ENCODE measurements at regions of chr6 and their contacts with region 1.

Region 1: DNA sequence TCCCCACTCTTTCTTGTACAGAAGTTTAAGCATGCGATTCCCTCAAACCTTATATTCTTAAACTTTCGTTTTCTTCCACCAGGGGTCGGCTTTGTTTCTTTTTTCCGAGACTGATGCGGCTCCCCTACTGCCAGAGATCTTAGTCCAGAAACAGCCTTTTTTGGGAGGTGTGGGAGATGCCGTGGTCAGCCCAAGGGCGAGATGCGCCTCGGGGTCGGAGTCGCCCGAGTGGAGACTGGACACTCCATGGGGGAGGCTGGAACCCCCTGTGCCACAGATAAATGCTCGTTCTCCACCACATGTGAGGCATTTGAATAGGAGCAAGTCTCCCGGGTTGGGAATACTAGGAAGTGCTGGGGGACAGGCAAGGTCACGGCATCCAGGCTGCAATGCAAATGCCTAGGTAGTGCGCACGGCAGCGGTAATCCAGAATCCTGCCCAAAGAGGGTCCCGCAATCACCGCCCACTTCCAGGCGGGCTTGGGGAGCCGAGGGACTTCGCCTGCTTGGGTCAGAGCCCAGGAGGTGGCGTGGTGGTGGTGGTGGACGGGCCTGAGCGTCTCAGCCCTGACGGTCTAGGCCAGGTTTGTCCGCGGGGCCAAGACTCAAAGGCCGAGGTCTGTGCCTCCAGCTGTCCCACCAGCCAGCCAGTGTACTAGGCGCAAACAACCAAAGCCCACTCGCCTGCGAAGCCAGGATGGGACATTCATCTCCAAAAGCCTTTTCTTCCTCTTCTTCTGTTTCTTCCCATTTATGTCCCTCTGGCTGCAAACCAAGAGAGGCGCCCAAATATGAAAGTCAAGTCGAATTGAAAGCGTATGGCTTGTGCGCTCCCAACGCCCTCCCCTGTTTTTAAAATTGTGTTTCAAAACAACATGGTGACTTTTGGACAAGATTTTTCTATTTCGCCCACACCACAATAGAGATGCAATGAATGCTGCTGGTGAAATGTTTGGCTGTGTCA is 39.3 kb upstream of the OSTM1 start:
- DNase-seq: peak; percentile 16
- H3K4me3 ChIP-seq: peak overlapping the region; percentile 62
- H3K27ac ChIP-seq: no peak overlapping the region
- H3K4me1 ChIP-seq: peaks cover 49% of the 10 kb centered on the region
- H3K27me3 ChIP-seq: peaks cover 100% of the 10 kb centered on the region
- CTCF ChIP-seq: peak; percentile 53

Region 2: GRCh38 chr6:107731422-107732319 is 382.2 kb before region 1 on chr6:
- intact Hi-C with region 1: no loop called
- DNase-seq: no peak
- H3K4me3 ChIP-seq: no peak overlapping the region
- H3K27ac ChIP-seq: no peak overlapping the region
- H3K4me1 ChIP-seq: no peaks in the 10 kb centered on the region
- H3K27me3 ChIP-seq: peaks cover 83% of the 10 kb centered on the region
- CTCF ChIP-seq: no peak

Region 3: GRCh38 chr6:107964671-107965340 is 149.0 kb before region 1 on chr6:
- intact Hi-C with region 1: no loop called
- DNase-seq: no peak
- H3K4me3 ChIP-seq: no peak overlapping the region
- H3K27ac ChIP-seq: no peak overlapping the region
- H3K4me1 ChIP-seq: no peaks in the 10 kb centered on the region
- H3K27me3 ChIP-seq: no peaks in the 10 kb centered on the region
- CTCF ChIP-seq: no peak

Region 4: DNA sequence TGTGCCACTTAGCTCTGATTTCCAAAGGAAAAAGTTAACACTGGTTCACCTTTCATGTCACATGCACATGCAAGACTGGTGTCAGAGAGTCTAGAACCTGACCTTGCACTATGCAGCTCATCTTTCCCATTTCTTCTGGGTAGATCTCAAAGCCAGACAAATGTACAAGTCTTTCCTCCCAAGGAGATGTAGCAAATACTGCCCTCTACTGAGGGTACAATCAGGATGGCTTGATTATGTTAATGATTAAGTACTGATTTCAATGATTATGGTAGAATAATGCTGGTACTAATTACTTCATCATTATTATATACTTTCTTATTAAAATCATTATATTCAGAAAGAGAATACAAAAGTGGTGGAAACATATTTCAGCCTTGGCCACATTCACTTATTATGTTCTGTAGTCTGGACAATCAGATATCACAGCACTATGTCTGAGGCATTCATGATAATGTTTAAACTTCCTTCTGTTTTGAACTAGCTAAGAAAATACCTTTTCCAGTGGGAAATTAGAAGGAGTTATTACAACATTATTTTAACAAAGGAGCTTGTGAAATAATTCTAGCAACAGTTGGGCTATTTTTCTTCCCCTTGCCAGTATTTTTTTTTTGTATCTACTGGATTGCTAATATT is 378.4 kb after region 1 on chr6:
- intact Hi-C with region 1: loop called (anchors 10 kb)
- DNase-seq: no peak
- H3K4me3 ChIP-seq: no peak overlapping the region
- H3K27ac ChIP-seq: no peak overlapping the region
- H3K4me1 ChIP-seq: no peaks in the 10 kb centered on the region
- H3K27me3 ChIP-seq: no peaks in the 10 kb centered on the region
- CTCF ChIP-seq: peak; percentile 71

Region 5: GRCh38 chr6:108526739-108527174 is 412.9 kb after region 1 on chr6:
- intact Hi-C with region 1: loop called (anchors 10 kb)
- DNase-seq: no peak
- H3K4me3 ChIP-seq: no peak overlapping the region
- H3K27ac ChIP-seq: no peak overlapping the region
- H3K4me1 ChIP-seq: no peaks in the 10 kb centered on the region
- H3K27me3 ChIP-seq: no peaks in the 10 kb centered on the region
- CTCF ChIP-seq: peak; percentile 89

Measured in left ventricle myocardium inferior (tissue), 1 donor.